HEK293 (cell line): ENCODE measurements at regions of chr5 and their contacts with region 1.

Region 1: DNA sequence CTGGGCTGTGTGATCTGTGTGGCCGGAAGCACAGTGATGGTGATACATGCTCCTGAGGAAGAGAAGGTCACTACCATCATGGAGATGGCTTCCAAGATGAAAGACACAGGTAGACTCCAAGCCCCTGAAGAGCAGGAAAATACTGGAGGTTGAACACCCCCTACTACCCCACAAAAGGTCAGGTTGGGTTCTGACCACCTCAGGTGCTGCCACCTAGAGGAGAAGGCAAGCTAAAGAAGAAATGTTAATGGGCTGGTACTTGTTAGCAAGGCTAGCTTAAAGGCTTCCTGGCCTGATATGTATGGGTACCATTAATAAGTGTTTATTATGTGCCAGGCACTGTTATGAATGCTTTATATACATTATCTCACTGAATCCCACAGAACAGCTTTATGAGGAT is 11.7 kb downstream of the NIPAL4 start:
- H3K4me3 ChIP-seq: no peak overlapping the region
- H3K27ac ChIP-seq: no peak overlapping the region
- H3K4me1 ChIP-seq: no peaks in the 10 kb centered on the region
- CTCF ChIP-seq: no peak

Region 2: GRCh38 chr5:157148734-157149615 is 322.7 kb before region 1 on chr5:
- CTCF ChIA-PET with region 1: interaction called, 11 read pairs
- POLR2A ChIA-PET with region 1: no interaction called
- H3K4me3 ChIP-seq: no peak overlapping the region
- H3K27ac ChIP-seq: no peak overlapping the region
- H3K4me1 ChIP-seq: no peaks in the 10 kb centered on the region
- CTCF ChIP-seq: no peak

Region 3: GRCh38 chr5:157431544-157432200 is 40.0 kb before region 1 on chr5:
- CTCF ChIA-PET with region 1: interaction called, 51 read pairs
- POLR2A ChIA-PET with region 1: no interaction called
- H3K4me3 ChIP-seq: no peak overlapping the region
- H3K27ac ChIP-seq: no peak overlapping the region
- H3K4me1 ChIP-seq: no peaks in the 10 kb centered on the region
- CTCF ChIP-seq: no peak

Region 4: DNA sequence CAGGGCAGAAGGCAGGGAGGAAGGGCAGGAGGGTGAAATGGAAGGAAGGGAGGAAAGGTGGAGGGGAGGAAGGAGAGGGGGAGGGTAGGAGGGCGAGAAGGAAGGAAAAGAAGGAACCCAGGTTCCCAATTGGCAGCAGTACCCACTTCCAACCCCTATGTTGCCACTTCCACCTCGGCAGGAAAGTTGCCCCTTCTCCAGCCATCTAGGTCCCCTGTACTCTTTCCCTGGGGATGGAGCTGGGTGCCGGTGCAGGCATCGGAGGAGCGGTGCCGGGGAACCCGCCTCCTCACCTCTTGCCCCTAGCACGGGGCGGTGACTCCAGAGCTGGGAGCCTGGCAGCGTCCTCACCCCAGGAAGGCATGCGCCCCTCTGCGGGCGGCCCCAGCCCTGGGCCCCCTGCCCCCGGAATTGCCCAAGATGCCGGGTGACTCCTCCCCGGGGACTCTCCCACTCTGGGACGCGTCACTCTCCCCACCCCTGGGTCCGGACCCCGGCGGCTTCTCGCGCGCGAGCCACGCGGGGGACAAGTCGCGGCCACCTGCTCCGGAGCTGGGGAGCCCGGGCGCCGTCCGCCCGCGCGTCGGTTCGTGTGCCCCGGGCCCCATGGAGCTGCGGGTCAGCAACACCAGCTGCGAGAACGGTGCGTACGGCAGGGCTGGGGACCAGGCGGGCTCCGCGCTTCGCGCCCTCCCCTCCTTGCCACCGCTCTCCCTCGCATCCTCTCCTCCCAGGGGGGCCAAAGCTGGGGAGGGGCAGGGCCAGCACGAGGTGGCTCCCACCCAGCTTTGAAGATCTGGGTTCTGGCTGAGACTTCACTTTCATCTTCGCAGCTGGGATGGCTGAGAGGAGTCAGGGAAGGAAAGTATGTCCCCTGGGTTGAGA is 11.8 kb before region 1 on chr5 and contains the start of gene NIPAL4:
- CTCF ChIA-PET with region 1: interaction called, 20 read pairs
- POLR2A ChIA-PET with region 1: no interaction called
- H3K4me3 ChIP-seq: peak within 1 kb of the TSS; percentile 29
- H3K27ac ChIP-seq: no peak within 1 kb of the TSS
- H3K4me1 ChIP-seq: no peaks in the 10 kb centered on the region; the same call in 1 of the 2 replicates
- CTCF ChIP-seq: no peak